Naive thymus-derived CD4-positive, alpha-beta T cell (primary cell): ENCODE measurements at regions of chr18 and their contacts with region 1.

Region 1: GRCh38 chr18:67217551-67218166 is 298.9 kb downstream of the DSEL start:
- DNase-seq: peak; percentile 13 to 67 (median 58)
- ATAC-seq: peak; percentile 89
- H3K4me3 ChIP-seq: no peak overlapping the region
- H3K4me3 Mint-ChIP-seq: no peak overlapping the region
- H3K27ac ChIP-seq: no peak overlapping the region
- H3K27ac Mint-ChIP-seq: no peak overlapping the region
- H3K4me1 ChIP-seq: no peaks in the 10 kb centered on the region
- H3K4me1 Mint-ChIP-seq: peaks cover 0 to 3% (median 0%) of the 10 kb centered on the region in 7 donors
- H3K27me3 ChIP-seq: no peaks in the 10 kb centered on the region
- H3K27me3 Mint-ChIP-seq: peaks cover 0 to 4% (median 0%) of the 10 kb centered on the region in 5 donors

Region 2: GRCh38 chr18:67144329-67144728 is 73.3 kb before region 1 on chr18:
- CTCF ChIA-PET with region 1: no interaction called
- POLR2A ChIA-PET with region 1: no interaction called
- intact Hi-C with region 1: no loop called
- DNase-seq: no peak
- ATAC-seq: no peak
- H3K4me3 ChIP-seq: no peak overlapping the region
- H3K4me3 Mint-ChIP-seq: no peak overlapping the region
- H3K27ac ChIP-seq: no peak overlapping the region
- H3K27ac Mint-ChIP-seq: no peak overlapping the region
- H3K4me1 ChIP-seq: no peaks in the 10 kb centered on the region
- H3K4me1 Mint-ChIP-seq: no peaks in the 10 kb centered on the region
- H3K27me3 ChIP-seq: no peaks in the 10 kb centered on the region
- H3K27me3 Mint-ChIP-seq: no peaks in the 10 kb centered on the region

Region 3: DNA sequence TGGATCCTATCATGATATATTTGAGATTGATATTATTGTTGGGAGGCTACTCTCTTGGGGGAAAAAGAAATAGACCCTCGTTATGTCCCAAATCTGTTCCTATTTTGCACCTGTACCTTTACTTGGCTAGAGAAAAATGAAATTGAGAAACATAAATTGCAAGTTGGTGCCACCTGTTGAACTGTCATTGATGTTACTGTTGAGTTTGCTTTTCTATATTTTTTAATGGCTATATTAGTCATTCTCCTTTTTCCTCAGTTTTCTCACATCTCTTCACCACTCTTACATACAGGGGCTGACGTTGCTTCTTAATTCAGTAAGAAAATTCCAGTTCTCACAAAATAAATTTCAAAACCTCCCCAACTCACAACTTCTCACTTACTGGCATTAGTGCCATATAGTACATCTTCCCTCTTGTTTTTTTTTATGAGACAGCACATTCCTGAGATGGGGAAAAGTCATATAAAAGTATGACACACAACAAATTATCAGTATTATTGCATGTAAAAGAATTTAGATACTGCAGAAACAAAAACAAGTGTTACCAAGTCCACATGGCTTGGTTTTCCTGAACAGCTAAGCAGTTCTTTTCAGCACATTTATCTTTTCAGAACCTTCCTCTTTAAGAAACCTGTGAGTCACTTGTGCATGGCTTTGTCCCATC is 647.1 kb after region 1 on chr18:
- CTCF ChIA-PET with region 1: no interaction called
- POLR2A ChIA-PET with region 1: no interaction called
- intact Hi-C with region 1: loop called in 1 of 2 experiments (anchors 2 kb)
- DNase-seq: no peak
- ATAC-seq: no peak
- H3K4me3 ChIP-seq: no peak overlapping the region
- H3K4me3 Mint-ChIP-seq: no peak overlapping the region
- H3K27ac ChIP-seq: no peak overlapping the region
- H3K27ac Mint-ChIP-seq: no peak overlapping the region
- H3K4me1 ChIP-seq: no peaks in the 10 kb centered on the region
- H3K4me1 Mint-ChIP-seq: no peaks in the 10 kb centered on the region
- H3K27me3 ChIP-seq: no peaks in the 10 kb centered on the region
- H3K27me3 Mint-ChIP-seq: no peaks in the 10 kb centered on the region

Region 4: GRCh38 chr18:68623342-68623741 is 1405.7 kb after region 1 on chr18:
- CTCF ChIA-PET with region 1: interaction called, 3 read pairs
- POLR2A ChIA-PET with region 1: no interaction called
- intact Hi-C with region 1: loop called (anchors 1 kb)
- DNase-seq: peak in 6 of 9 donors; percentile 2 to 26 (median 8)
- ATAC-seq: peak; percentile 40
- H3K4me3 ChIP-seq: no peak overlapping the region
- H3K4me3 Mint-ChIP-seq: no peak overlapping the region
- H3K27ac ChIP-seq: no peak overlapping the region
- H3K27ac Mint-ChIP-seq: no peak overlapping the region
- H3K4me1 ChIP-seq: no peaks in the 10 kb centered on the region
- H3K4me1 Mint-ChIP-seq: no peaks in the 10 kb centered on the region
- H3K27me3 ChIP-seq: no peaks in the 10 kb centered on the region
- H3K27me3 Mint-ChIP-seq: peaks cover 0 to 12% (median 4%) of the 10 kb centered on the region in 5 donors

Region 5: DNA sequence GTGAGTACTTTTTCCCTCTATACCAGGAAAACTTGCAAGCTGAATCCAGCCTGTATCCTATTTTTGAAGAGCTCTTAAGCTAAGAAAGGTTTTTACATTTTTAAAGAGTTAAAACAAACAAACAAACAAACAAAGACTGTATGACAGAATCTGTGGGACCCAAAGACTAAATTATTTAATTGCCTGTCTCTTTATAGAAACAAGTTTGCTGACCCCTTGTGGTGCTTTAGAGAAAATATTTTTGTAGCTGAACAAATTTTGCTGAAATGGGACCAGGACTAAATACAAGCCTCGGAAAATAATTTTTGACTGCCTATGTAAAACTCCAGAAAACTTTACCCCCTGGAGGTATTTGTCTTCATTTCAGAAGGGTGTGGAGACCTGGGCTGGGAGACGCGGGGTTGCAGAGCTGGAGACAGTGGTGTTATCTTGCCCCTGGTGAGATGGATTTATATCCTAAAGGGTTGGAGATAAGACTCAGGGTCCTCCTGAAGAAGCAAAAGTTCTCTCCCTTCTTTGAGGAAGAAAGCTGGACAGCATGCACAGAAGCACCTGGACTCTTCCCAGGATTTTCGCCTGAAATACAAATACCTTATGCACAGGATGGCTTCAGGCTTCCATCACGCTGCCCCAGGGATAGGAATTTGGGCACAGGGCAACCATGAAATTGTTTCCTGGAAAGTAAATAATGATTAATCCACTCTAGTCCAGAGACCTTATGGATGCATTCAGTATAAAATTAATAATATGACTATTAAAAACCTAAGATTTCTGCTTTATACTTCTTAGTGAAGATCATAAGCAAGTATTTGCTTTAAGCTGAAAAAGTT is 1442.9 kb after region 1 on chr18:
- CTCF ChIA-PET with region 1: interaction called, 9 read pairs
- POLR2A ChIA-PET with region 1: no interaction called
- intact Hi-C with region 1: loop called (anchors 1 kb)
- DNase-seq: peak in 6 of 9 donors; percentile 2 to 34 (median 24)
- ATAC-seq: no peak
- H3K4me3 ChIP-seq: no peak overlapping the region
- H3K4me3 Mint-ChIP-seq: no peak overlapping the region
- H3K27ac ChIP-seq: no peak overlapping the region
- H3K27ac Mint-ChIP-seq: no peak overlapping the region
- H3K4me1 ChIP-seq: no peaks in the 10 kb centered on the region
- H3K4me1 Mint-ChIP-seq: no peaks in the 10 kb centered on the region
- H3K27me3 ChIP-seq: no peaks in the 10 kb centered on the region
- H3K27me3 Mint-ChIP-seq: peaks cover 0 to 8% (median 4%) of the 10 kb centered on the region in 5 donors

Region 6: GRCh38 chr18:68735483-68736343 is 1518.1 kb after region 1 on chr18:
- CTCF ChIA-PET with region 1: interaction called, 6 read pairs
- POLR2A ChIA-PET with region 1: no interaction called
- intact Hi-C with region 1: loop called (anchors 1 kb)
- DNase-seq: peak in 5 of 9 donors; percentile 28 to 46 (median 36)
- ATAC-seq: peak; percentile 78
- H3K4me3 ChIP-seq: no peak overlapping the region
- H3K4me3 Mint-ChIP-seq: no peak overlapping the region
- H3K27ac ChIP-seq: no peak overlapping the region
- H3K27ac Mint-ChIP-seq: no peak overlapping the region
- H3K4me1 ChIP-seq: no peaks in the 10 kb centered on the region
- H3K4me1 Mint-ChIP-seq: peaks cover 0 to 5% (median 0%) of the 10 kb centered on the region in 7 donors
- H3K27me3 ChIP-seq: no peaks in the 10 kb centered on the region
- H3K27me3 Mint-ChIP-seq: no peaks in the 10 kb centered on the region